ENCODE measurements at regions of chr2 and their contacts with region 1.

Region 1: GRCh38 chr2:27050281-27050995 is 1.0 kb upstream of the AGBL5 start:
- DNase-seq: peak; percentile 85
- CTCF ChIP-seq: peak; percentile 7

Region 2: GRCh38 chr2:27032495-27033252 is 17.8 kb before region 1 on chr2 and contains the start of gene TMEM214:
- CTCF ChIA-PET with region 1: interaction called, 66 read pairs
- POLR2A ChIA-PET with region 1: interaction called, 11 read pairs
- DNase-seq: peak; percentile 96
- CTCF ChIP-seq: no peak

Region 3: DNA sequence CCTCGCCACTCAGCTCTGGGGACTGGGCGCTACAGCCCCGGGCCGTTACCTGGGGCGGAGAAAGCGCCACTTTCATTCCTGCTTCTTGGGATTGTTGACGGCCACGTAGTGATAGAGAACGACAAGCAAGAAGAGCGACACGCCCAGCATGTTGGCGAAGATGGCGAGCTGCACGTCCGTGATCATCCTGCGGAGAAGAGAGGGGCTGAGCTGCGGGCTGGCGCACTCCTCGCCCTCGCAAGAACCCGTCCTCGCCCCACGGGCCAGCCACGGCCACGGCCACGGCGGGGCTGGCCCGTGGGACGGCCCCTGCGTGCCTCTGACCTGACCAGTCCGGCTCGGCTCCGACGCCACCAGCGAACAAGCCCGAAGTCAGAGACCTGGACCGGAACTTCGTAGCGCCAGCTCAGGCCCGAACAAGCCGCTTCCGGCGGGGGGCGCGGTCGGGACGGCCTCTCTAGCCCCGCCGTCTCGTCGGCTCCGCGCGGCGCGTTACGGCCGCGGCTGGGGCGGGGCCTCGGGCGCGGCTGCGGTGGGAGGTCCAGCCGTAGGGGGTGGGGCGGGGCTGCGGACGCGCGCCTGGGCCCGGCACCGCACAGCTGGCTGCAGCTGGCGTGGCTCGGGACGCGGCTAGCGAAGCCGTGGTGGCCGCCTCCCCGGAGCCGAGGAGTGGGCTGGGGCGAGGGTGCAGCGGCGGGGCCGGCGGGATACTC is 21.0 kb after region 1 on chr2 and contains the start of gene OST4:
- CTCF ChIA-PET with region 1: interaction called, 36 read pairs
- POLR2A ChIA-PET with region 1: interaction called, 5 read pairs
- DNase-seq: peak; percentile 97
- CTCF ChIP-seq: no peak

Region 4: DNA sequence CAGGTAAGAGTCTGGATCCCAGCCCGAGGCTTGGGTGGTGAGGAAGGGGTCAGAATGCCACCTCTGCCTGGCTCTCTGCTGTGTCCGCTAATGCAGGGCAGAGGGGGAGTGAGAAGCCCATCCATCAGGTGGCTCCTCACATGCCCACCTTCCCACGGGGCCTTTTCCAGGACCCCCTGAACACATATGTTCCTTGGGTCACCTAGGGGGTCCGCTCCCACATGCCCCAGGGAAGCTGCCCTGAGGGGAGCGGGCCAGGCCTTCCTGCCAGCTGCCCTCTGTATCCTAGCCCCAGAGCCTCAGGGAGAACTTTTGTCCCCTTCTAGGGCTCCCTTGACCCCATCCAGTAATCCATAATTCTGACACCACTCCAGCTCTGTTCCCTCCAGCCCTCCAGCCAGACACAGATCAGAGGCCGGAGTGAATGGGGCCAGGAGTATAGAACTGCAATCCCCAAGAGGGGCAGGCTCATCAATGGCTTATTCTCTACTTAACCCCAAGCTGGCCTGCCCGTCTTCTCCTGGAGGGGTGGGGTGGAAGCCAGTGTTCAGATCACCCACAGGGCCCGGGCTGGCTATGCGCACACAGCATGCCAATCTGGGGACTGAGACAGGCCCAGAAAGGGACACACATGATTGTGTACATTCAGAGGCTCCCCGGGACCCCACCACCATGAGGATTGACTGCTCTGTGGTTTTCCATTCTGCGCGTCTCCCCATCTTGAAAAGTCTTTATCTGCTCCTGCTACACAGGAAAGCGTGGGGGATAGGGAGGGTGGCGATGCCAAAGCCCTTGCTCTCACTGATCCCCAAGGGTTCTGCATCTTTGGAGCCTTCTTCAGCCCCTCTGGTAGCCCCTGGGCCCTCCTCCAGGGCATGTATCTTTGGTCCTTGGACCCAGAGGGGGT is 29.0 kb after region 1 on chr2:
- CTCF ChIA-PET with region 1: interaction called, 36 read pairs
- POLR2A ChIA-PET with region 1: interaction called, 4 read pairs
- DNase-seq: no peak
- CTCF ChIP-seq: no peak

Region 5: DNA sequence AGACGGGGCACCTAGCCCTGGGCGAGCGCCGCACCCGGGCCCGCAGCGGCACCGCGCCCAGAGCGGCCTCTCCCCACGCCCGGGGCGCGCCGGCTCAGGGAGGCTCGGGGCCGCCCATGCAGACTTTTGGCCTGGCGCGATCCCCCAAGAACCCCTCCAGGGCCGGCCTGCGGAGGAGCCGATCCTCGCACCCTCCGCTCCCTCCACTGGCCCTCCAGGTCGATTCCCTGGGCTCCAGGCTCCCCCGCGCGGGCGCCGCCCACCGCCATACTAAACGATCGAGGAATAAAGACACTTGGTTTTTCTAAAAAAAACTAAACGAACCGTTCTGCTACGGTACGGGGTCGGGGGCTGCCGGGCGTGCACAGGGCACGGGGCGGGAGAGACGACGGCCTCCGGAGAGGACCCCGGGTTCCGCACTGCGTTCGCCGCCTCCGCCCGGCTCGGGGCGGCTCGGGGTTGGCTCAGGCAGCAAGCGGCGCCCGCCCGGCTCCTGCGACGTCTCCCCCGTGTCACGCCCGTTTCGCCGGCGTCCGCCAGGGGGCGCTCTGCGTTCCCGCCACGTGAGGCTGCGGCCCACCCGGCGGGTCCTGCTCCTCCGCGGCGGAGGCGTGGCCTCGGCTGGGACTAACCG is 35.8 kb after region 1 on chr2:
- CTCF ChIA-PET with region 1: interaction called, 13 read pairs
- POLR2A ChIA-PET with region 1: interaction called, 4 read pairs
- DNase-seq: peak; percentile 99
- CTCF ChIP-seq: peak; percentile 94

Region 6: GRCh38 chr2:27453967-27454366 is 403.5 kb after region 1 on chr2:
- CTCF ChIA-PET with region 1: no interaction called
- POLR2A ChIA-PET with region 1: no interaction called
- DNase-seq: no peak
- CTCF ChIP-seq: no peak

Measured in GM10248 (cell line).